GM12878 (cell line): ENCODE measurements at regions of chr22 and their contacts with region 1.

Region 1: GRCh38 chr22:43273902-43274484 is 69.2 kb downstream of the SCUBE1 start:
- DNase-seq: peak; percentile 13
- ATAC-seq: peak; percentile 79
- H3K4me3 ChIP-seq: no peak overlapping the region
- H3K27ac ChIP-seq: no peak overlapping the region
- H3K4me1 ChIP-seq: peaks cover 7% of the 10 kb centered on the region
- H3K27me3 ChIP-seq: no peaks in the 10 kb centered on the region
- CTCF ChIP-seq: peak; percentile 68 to 81 (median 70)
- EP300 ChIP-seq: no peak
- POLR2A ChIP-seq: no peak
- RAD21 ChIP-seq: peak; percentile 93

Region 2: GRCh38 chr22:43159484-43160178 is 114.4 kb before region 1 on chr22:
- CTCF ChIA-PET with region 1: no interaction called
- POLR2A ChIA-PET with region 1: no interaction called
- RAD21 ChIA-PET with region 1: no interaction called
- SMC1A ChIA-PET with region 1: no interaction called
- in situ Hi-C with region 1: no loop called
- intact Hi-C with region 1: no loop called
- DNase-seq: no peak
- ATAC-seq: no peak
- H3K4me3 ChIP-seq: no peak overlapping the region
- H3K27ac ChIP-seq: no peak overlapping the region
- H3K4me1 ChIP-seq: no peaks in the 10 kb centered on the region; the same call in 1 of the 2 replicates
- H3K27me3 ChIP-seq: no peaks in the 10 kb centered on the region; a peak in 1 of 4 replicates
- CTCF ChIP-seq: peak; percentile 26 to 44 (median 38); a peak in 5 of 6 replicates
- EP300 ChIP-seq: no peak
- POLR2A ChIP-seq: no peak
- RAD21 ChIP-seq: peak; percentile 34; the same call in 1 of the 2 replicates

Region 3: GRCh38 chr22:43230971-43231723 is 42.8 kb before region 1 on chr22:
- CTCF ChIA-PET with region 1: interaction called, 14 read pairs
- POLR2A ChIA-PET with region 1: no interaction called
- RAD21 ChIA-PET with region 1: interaction called, 5 read pairs
- SMC1A ChIA-PET with region 1: interaction called, 3 read pairs
- in situ Hi-C with region 1: no loop called
- intact Hi-C with region 1: loop called (anchors 5 kb)
- DNase-seq: no peak
- ATAC-seq: peak; percentile 84
- H3K4me3 ChIP-seq: no peak overlapping the region
- H3K27ac ChIP-seq: no peak overlapping the region
- H3K4me1 ChIP-seq: no peaks in the 10 kb centered on the region
- H3K27me3 ChIP-seq: peaks cover 5 to 6% of the 10 kb centered on the region in 2 experiments; a peak in 3 of 4 replicates
- CTCF ChIP-seq: peak; percentile 92 to 97 (median 94)
- EP300 ChIP-seq: no peak
- POLR2A ChIP-seq: no peak
- RAD21 ChIP-seq: peak; percentile 97

Region 4: GRCh38 chr22:43263645-43264514 is 10.1 kb before region 1 on chr22:
- CTCF ChIA-PET with region 1: interaction called, 16 read pairs
- POLR2A ChIA-PET with region 1: no interaction called
- RAD21 ChIA-PET with region 1: no interaction called
- SMC1A ChIA-PET with region 1: interaction called, 4 read pairs
- in situ Hi-C with region 1: no loop called
- intact Hi-C with region 1: no loop called
- DNase-seq: peak; percentile 85
- ATAC-seq: peak; percentile 87
- H3K4me3 ChIP-seq: peak overlapping the region; percentile 12; the same call in 1 of the 2 replicates
- H3K27ac ChIP-seq: peak overlapping the region; percentile 77
- H3K4me1 ChIP-seq: peaks cover 29% of the 10 kb centered on the region
- H3K27me3 ChIP-seq: peaks cover 2 to 4% of the 10 kb centered on the region in 2 experiments; a peak in 3 of 4 replicates
- CTCF ChIP-seq: no peak
- EP300 ChIP-seq: peak; percentile 50 to 84; a peak in 2 of 4 replicates
- POLR2A ChIP-seq: peak; percentile 7; the same call in 1 of the 2 replicates
- RAD21 ChIP-seq: no peak

Region 5: DNA sequence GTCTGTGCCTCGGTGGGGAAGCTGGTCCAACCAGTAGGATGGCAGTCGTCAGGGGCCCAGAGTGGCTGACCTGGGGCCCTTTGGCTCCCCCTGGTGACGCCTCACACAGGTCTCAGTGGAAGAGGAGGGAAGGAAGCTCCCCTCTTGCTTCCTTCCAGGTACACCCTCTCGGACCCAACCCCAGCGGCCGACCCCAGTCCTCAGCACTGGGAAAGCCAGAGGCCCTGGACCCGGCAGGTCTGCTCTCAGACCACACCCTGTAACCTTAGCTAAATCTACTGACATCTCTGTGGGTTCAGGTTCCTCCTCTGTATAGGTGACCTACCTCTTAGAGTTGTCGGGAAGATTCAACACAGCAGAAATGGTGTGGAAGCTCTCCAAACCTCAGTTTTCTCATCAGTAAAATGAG is 72.5 kb after region 1 on chr22:
- CTCF ChIA-PET with region 1: interaction called, 73 read pairs
- POLR2A ChIA-PET with region 1: no interaction called
- RAD21 ChIA-PET with region 1: interaction called, 37 read pairs
- SMC1A ChIA-PET with region 1: interaction called, 48 read pairs
- in situ Hi-C with region 1: loop called (anchors 5 kb)
- intact Hi-C with region 1: loop called (anchors 1 kb)
- DNase-seq: no peak
- ATAC-seq: peak; percentile 95
- H3K4me3 ChIP-seq: no peak overlapping the region
- H3K27ac ChIP-seq: no peak overlapping the region
- H3K4me1 ChIP-seq: peaks cover 7% of the 10 kb centered on the region
- H3K27me3 ChIP-seq: peaks cover 7% of the 10 kb centered on the region in 2 experiments; a peak in 3 of 4 replicates
- CTCF ChIP-seq: peak; percentile 69 to 80 (median 70)
- EP300 ChIP-seq: no peak
- POLR2A ChIP-seq: no peak
- RAD21 ChIP-seq: peak; percentile 54

Region 6: DNA sequence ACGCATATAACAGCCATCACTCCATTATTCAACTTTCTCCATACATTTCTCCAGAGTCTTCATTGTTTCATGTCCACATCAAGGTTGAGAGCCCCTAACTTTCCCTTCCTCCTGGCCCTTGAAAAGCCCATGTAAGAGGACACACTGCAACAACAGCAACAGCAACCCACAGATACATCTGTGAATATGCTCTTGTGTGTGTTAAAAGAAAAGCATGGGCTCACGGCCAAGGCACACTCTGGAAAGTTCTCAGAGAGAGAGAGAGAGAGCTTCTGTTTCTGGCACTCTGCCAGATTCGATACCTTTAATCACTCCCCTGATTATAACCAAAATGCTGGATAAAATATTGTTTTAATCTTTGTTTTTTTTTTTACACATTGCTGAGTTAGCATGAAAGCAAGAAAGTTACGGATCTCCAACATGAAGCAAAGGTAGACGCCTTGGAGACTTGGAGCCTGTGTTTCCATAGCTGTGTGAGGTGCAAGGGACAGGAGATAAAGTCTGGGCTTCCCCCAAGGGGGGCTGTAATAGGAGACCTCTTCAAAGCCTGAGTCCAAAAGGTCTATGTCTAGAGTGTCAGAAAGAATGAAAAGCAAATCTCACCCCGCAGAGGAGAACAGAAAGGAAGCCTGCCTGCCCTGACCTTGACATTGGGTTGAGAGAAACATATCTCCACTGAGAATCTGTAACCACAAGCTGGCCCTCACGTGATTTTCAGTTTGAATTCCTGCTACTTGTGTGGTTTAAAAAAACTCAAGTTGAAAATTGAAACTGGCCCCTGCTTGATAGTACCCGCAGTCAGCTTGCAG is 104.1 kb after region 1 on chr22:
- CTCF ChIA-PET with region 1: interaction called, 72 read pairs
- POLR2A ChIA-PET with region 1: no interaction called
- RAD21 ChIA-PET with region 1: interaction called, 10 read pairs
- SMC1A ChIA-PET with region 1: interaction called, 9 read pairs
- in situ Hi-C with region 1: loop called (anchors 5 kb)
- intact Hi-C with region 1: no loop called
- DNase-seq: peak; percentile 63
- ATAC-seq: peak; percentile 79
- H3K4me3 ChIP-seq: peak overlapping the region; percentile 34; the same call in 1 of the 2 replicates
- H3K27ac ChIP-seq: peak overlapping the region; percentile 45; the same call in 1 of the 2 replicates
- H3K4me1 ChIP-seq: peaks cover 27% of the 10 kb centered on the region
- H3K27me3 ChIP-seq: peaks cover 0 to 2% of the 10 kb centered on the region in 2 experiments; a peak in 2 of 4 replicates
- CTCF ChIP-seq: no peak
- EP300 ChIP-seq: 0 out of 4 replicates have a peak, but pooled peaks of 1 of the 2 experiments have one; percentile 66
- POLR2A ChIP-seq: no peak
- RAD21 ChIP-seq: no peak

Region 7: DNA sequence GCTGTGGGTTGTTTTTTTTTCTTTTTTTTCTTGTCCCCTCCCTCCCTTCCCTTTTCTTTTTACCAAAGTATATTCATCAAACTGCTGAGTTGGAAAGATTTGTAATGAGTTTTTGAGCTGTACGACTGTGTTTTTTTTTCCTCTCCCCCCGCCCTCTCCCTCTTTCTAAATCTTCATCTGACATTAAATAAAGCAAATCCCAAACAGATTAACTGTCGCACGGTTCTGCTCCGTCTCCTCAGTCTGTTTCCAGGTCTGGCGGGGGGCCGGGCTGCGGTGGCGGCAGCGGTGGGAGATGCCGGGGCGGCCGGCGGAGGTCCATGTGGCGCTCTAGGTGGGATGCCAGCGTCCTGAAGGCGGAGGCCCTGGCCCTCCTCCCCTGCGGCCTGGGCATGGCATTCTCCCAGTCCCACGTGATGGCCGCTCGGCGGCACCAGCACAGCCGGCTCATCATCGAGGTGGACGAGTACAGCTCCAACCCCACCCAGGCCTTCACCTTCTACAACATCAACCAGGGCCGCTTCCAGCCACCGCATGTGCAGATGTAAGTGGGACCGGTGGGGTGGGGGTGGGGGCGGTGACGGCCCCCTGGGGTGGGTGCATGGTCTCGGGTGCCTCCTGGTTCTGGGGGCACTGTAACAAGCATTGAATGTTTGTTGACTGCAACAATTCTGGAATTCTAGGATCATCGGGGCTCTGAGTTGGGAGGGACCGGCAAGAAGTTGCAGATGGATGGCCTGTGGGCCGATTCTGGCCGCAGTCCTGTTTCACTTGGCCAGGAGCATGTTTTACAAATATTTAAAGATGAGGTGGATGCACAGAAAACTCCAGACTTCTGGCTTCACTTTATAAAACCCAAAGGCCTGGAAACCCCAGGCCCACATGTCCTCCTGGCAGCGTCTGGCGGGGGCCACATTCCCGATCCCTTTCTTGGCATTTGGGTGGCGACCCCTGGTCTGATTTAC is 151.0 kb after region 1 on chr22:
- CTCF ChIA-PET with region 1: no interaction called
- POLR2A ChIA-PET with region 1: no interaction called
- RAD21 ChIA-PET with region 1: no interaction called
- SMC1A ChIA-PET with region 1: no interaction called
- in situ Hi-C with region 1: no loop called
- intact Hi-C with region 1: no loop called
- DNase-seq: no peak
- ATAC-seq: no peak
- H3K4me3 ChIP-seq: no peak overlapping the region
- H3K27ac ChIP-seq: no peak overlapping the region
- H3K4me1 ChIP-seq: no peaks in the 10 kb centered on the region
- H3K27me3 ChIP-seq: no peaks in the 10 kb centered on the region; a peak in 3 of 4 replicates
- CTCF ChIP-seq: no peak
- EP300 ChIP-seq: no peak
- POLR2A ChIP-seq: no peak
- RAD21 ChIP-seq: no peak

Region 8: GRCh38 chr22:43625242-43625641 is 351.2 kb after region 1 on chr22:
- CTCF ChIA-PET with region 1: no interaction called
- POLR2A ChIA-PET with region 1: no interaction called
- RAD21 ChIA-PET with region 1: no interaction called
- SMC1A ChIA-PET with region 1: no interaction called
- in situ Hi-C with region 1: no loop called
- intact Hi-C with region 1: no loop called
- DNase-seq: no peak
- ATAC-seq: no peak
- H3K4me3 ChIP-seq: no peak overlapping the region
- H3K27ac ChIP-seq: no peak overlapping the region
- H3K4me1 ChIP-seq: no peaks in the 10 kb centered on the region
- H3K27me3 ChIP-seq: no peaks in the 10 kb centered on the region
- CTCF ChIP-seq: no peak
- EP300 ChIP-seq: no peak
- POLR2A ChIP-seq: no peak
- RAD21 ChIP-seq: no peak